ENCODE measurements at regions of chr17 and their contacts with region 1.

Region 1: DNA sequence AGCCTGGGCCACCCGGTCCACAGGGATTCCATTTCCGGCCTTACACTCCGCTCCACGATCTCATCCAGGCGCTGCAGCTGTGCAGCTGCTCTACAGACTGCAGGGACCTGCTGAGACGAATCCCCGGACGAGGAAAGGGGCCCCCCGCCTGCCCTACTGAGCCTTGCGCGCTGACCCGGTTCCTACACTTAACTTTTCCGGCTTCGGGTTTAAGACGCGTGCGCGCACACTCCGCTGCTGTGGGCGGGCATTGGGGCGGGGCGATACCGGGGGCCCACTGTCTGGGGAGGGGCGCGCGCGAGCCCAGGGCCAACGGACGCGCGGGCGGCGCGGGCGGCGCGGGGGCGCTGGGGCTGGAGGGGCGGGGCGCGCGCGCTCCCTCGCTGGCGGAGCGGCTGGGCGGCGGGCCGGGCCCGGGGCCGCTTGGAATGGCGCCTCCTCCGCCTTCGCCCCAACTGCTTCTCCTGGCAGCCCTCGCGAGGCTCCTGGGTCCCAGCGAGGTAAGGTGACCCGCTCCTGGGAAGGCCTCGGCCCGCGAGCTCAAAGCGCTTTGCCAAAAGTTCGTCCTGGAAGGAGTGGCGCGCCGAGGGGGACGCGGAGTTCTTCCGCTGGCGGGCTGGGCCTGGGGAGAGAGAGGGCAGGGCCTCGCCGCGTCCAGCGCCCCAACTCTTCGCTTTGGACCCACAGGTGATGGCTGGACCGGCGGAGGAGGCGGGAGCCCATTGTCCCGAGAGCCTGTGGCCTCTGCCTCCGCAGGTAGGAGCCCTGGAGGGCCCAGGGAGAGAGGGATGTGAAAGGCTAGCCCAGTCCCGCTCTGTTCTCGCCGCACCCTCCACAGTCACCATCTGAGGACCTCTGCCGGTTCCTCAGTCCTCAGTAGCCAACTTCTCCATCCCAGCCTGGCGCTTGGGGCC is at the start of gene TP53I13:
- DNase-seq: peak; percentile 91
- H3K4me3 Mint-ChIP-seq: peak within 1 kb of the TSS; percentile 95
- H3K27ac Mint-ChIP-seq: peak within 1 kb of the TSS; percentile 97
- H3K4me1 Mint-ChIP-seq: peaks cover 33% of the 10 kb centered on the region
- H3K27me3 Mint-ChIP-seq: no peaks in the 10 kb centered on the region
- total RNA-seq, gene TP53I13: 71.4 to 75.0 TPM

Region 2: GRCh38 chr17:29557085-29557697 is 11.4 kb before region 1 on chr17:
- CTCF ChIA-PET with region 1: interaction called, 10 read pairs
- POLR2A ChIA-PET with region 1: interaction called, 3 read pairs
- DNase-seq: no peak
- H3K4me3 Mint-ChIP-seq: no peak overlapping the region
- H3K27ac Mint-ChIP-seq: no peak overlapping the region
- H3K4me1 Mint-ChIP-seq: peaks cover 25% of the 10 kb centered on the region
- H3K27me3 Mint-ChIP-seq: no peaks in the 10 kb centered on the region

Region 3: GRCh38 chr17:29579866-29580771 is 11.5 kb after region 1 on chr17:
- CTCF ChIA-PET with region 1: interaction called, 77 read pairs
- POLR2A ChIA-PET with region 1: interaction called, 3 read pairs
- DNase-seq: peak; percentile 92
- H3K4me3 Mint-ChIP-seq: no peak overlapping the region
- H3K27ac Mint-ChIP-seq: peak overlapping the region; percentile 84
- H3K4me1 Mint-ChIP-seq: peaks cover 37% of the 10 kb centered on the region
- H3K27me3 Mint-ChIP-seq: no peaks in the 10 kb centered on the region

Region 4: DNA sequence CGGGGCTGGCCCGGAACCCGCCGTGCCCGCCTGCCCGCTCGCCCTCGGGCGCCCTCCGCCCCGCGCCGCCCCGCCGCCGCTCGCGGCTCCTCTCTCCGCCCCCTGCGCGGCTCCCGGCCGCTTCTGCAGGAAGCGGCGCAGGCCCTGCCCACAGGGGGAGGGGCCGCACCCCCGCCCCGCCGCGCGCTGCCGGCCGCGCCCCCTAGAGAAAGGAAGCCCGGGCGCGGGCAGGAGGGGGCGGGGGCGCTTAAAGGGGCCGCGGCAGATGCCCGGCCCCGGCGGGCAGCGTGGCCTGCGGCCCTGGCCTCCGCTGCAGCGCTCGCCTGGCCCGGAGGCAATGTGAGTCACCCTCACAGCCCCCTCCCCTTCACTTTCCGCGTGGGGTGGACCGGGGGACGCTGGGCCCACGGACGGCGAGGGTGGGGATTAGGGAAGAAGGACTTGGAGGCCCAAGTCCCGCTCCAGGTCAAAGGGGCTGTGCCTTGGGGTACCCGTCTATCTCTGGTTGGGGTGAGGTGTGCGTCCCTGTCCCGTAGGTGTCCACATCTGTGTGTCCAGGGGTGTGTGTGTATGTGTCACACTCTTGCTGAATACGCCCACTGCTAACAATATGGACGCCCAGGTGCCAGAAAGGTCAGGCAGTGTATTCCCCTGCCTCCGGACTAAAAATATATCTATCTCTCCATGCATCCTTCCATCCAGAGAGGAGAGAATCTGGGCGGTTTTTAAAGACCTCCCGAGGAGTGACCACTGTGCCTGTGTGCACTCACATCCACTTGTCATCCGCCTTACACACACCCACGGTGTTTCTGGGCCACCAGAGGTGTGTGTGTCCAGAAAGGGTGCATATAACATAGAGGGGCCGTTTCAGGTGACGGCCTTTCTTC is 21.2 kb after region 1 on chr17 and contains the start of gene GIT1:
- CTCF ChIA-PET with region 1: interaction called, 20 read pairs
- POLR2A ChIA-PET with region 1: no interaction called
- DNase-seq: peak; percentile 86
- H3K4me3 Mint-ChIP-seq: peak within 1 kb of the TSS; percentile 98
- H3K27ac Mint-ChIP-seq: peak within 1 kb of the TSS; percentile 93
- H3K4me1 Mint-ChIP-seq: peaks cover 73% of the 10 kb centered on the region
- H3K27me3 Mint-ChIP-seq: no peaks in the 10 kb centered on the region
- total RNA-seq, gene GIT1: 107 TPM

Region 5: DNA sequence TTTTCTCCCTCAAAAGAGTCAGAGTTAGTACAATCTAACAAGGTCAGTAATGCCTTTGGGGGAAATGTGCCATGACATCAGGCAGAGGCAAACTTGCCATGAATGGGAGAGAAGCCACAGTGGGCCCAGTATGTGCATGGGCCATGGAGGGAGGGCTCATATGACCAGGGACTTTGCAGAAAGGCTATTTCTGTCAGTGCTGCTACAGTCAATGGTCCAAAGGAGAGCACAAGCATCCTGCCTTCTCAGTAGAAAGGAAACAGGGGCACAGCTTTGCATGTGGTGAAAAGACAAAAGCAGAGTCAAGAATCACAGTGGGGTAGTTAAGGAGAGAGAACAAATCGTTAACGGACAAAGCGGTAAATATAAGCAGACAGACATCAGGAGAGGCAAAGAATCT is 65.3 kb after region 1 on chr17:
- CTCF ChIA-PET with region 1: no interaction called
- POLR2A ChIA-PET with region 1: no interaction called
- DNase-seq: no peak
- H3K4me3 Mint-ChIP-seq: no peak overlapping the region
- H3K27ac Mint-ChIP-seq: peak overlapping the region; percentile 7
- H3K4me1 Mint-ChIP-seq: peaks cover 21% of the 10 kb centered on the region
- H3K27me3 Mint-ChIP-seq: no peaks in the 10 kb centered on the region